ENCODE measurements at regions of chr20 and their contacts with region 1.

Region 1: GRCh38 chr20:48374991-48375595 is 452.7 kb downstream of the PREX1 start:
- DNase-seq: peak; percentile 74
- H3K4me3 ChIP-seq: no peak overlapping the region
- H3K27ac ChIP-seq: peak overlapping the region; percentile 73
- H3K4me1 ChIP-seq: peaks cover 39% of the 10 kb centered on the region
- H3K27me3 ChIP-seq: no peaks in the 10 kb centered on the region
- CTCF ChIP-seq: no peak

Region 2: DNA sequence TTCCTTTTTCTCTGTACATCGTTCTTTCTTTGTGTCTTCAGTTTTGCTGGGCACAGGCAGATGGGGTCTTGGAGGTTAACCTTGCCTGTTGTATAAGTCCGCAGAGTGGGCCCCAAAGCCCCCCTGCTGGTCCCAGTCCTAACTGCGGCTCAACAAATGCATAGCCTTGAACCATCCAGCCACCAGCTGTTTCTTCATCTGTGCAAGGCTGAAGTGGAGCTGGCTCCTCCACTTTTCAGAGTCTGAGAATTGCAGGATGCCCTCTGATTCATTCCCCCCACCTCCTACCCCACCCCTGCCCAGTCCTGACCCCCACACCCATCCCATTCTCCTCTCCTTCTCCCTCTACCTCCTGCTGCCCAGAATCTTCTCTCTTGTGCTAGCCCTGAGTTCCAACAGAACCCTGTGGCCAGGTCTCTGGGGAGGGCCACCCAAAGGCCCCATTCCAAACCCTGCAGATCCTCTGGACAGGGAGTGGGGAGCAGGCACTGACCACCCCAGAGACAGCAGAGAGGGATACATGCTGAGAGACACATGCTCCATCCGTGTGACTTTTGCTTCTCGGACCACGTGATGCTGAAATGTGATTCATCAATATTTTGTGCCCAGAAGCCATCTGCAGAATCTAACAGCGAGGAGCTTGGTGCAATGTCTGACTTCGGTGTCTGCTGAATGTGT is 203.3 kb before region 1 on chr20:
- CTCF ChIA-PET with region 1: no interaction called
- POLR2A ChIA-PET with region 1: no interaction called
- intact Hi-C with region 1: no loop called
- DNase-seq: no peak
- H3K4me3 ChIP-seq: no peak overlapping the region
- H3K27ac ChIP-seq: no peak overlapping the region
- H3K4me1 ChIP-seq: no peaks in the 10 kb centered on the region
- H3K27me3 ChIP-seq: peaks cover 34% of the 10 kb centered on the region
- CTCF ChIP-seq: no peak

Region 3: DNA sequence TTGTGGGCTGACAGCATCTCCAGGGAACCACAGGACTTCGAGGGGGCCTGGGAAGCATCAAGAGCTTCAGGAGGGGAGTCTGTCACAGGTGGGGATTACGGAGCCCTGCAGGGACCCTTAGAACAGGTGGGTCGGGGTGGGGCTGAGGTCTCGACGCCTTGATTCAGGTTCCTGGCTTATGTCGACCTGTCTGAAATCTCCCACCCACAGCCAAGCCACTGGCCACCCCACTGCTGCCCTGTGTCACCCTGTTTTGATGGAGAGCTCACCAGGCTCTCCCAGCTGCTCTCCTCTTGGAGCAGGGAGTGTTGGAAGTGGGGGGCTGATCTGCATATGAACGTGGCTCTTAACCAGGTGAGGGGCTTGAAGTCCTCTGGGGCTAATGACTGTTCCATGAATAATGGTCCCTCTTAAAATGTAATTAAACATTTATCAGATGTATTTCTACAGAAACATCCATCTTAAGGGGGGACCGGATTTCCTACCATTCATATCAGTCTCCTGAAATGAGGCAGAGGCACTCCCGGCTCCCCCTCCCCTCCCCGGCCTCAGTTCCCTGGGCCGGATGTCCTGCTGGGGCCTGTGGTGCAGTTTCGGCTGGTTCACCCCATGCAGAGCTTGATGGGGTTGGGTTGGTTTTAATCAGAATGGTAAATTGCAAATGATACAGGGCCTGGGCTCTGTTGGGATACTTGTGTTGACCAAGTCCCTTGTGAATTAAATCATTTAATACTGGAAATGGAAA is 103.1 kb after region 1 on chr20:
- CTCF ChIA-PET with region 1: interaction called, 3 read pairs
- POLR2A ChIA-PET with region 1: no interaction called
- intact Hi-C with region 1: loop called (anchors 2 kb)
- DNase-seq: peak; percentile 89
- H3K4me3 ChIP-seq: no peak overlapping the region
- H3K27ac ChIP-seq: no peak overlapping the region
- H3K4me1 ChIP-seq: peaks cover 30% of the 10 kb centered on the region
- H3K27me3 ChIP-seq: peaks cover 78% of the 10 kb centered on the region
- CTCF ChIP-seq: no peak

Measured in A673 (cell line).